Right ventricle myocardium inferior (tissue), 1 donor: ENCODE measurements at regions of chr1 and their contacts with region 1.

Region 1: DNA sequence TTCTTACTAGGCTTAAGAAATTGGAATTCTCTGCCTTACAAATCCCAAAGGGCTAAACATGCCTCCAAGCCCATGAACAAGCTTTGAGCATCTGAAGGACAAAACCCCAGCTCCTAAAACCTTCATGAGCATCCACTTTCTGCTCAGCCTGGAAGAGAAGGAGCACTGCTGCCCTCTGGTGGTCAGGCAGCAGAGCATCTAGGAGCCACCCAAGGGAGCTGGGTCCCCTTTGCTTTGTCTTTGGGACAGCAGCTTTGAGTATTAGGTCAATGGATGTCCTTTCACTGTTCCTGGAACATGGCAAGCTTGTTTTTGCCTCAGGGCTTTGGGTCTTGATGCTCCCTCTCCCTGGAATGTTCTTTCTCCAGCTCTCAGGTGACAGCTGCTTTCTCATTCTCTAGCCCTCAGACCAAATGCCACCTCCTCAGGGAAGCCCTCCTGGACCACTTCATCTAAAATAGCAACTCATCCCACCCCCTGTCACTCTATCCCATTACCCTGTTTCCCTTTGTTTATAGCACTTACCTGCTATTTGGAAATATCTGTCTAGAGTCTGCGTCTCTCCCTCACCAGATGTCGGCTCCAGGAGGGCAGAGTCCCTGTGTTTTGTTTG is 25.7 kb downstream of the RAB7B start:
- DNase-seq: no peak
- ATAC-seq: peak; percentile 77

Region 2: DNA sequence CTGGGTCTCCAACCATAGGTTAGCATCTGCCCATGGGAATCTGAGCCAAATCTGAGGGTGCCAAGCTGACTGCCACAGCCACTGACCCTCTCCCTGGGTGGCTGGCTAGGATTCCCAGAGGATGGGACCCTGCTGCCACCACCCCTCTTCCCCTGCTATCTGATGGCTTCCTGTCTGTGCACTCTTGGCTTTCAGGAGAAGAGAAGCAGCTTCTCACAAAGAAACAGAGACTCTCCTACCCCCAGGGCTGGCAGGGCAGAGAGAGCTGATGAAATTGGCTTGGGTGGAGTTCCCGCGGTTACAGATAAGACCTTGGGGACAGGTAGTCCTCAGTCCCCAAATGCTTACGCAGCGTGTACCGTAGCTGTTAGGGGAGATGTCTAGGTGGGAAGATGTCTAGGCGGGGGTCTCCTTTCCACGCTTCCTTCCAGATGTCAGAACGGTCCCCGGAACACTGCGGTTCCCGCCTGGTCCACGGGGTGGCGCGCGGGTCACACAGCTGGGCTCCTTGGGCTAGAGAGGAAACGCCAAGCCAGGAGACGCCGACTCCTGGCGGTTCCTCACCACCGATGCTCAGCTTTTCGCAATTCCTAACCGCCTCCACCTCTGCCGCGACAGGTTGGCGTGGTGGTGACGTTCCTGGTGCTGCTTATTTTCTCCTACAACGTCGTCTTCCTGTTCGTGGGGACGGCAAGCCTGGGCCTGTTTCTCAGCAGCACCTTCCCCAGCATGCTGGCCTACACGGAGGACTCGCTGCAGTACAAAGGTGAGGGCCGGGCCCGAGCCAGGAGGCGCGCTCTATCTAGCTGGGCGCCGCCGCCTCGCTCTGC is 385.8 kb before region 1 on chr1:
- intact Hi-C with region 1: loop called (anchors 5 kb)
- DNase-seq: peak; percentile 94
- ATAC-seq: peak; percentile 95

Region 3: DNA sequence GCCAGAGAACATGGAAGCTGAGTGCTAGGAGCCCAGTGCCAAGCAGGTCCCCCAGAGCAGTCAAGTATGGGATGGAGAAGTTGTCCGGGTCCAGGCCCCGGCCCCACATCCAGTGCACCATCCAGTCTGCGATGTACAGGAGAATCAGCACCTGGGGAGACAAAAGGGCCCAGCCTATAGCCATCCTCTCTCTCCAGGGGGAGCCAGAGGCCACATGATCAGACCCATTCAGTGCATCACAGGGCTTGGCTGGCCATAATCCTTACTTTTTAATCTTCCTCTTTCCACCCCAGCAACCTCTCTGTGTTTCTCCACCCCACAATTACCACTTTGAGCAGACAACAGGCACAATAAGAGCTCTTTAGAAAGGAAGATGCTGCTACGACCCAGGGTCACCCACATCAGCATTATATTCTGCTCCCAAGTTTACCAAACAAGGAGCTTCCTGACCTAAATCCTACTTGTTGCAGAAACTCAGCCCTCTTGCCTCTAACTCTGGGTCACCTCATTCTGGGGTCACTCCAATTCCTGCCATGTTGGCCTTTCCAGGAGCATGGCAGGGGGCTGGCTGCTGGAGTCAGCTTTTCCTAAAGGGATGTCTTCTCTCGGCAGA is 185.8 kb before region 1 on chr1:
- intact Hi-C with region 1: loop called (anchors 2 kb)
- DNase-seq: no peak
- ATAC-seq: peak; percentile 58

Region 4: GRCh38 chr1:205919026-205919746 is 58.3 kb before region 1 on chr1:
- intact Hi-C with region 1: loop called (anchors 1 kb)
- DNase-seq: peak; percentile 87
- ATAC-seq: peak; percentile 53